Activated T-helper 1 cell treated with anti-CD3 and anti-CD28 coated beads, Interleukin-12 subunit alpha, Interleukin-12 subunit beta, Interleukin-2, Interleukin-4 antibody, amounts not matched to agents 30 ng/mL and 10 ng/mL and 1 ng/mL, durations not matched to agents 14 hours and 24 hours and 36 hours (primary cell): ENCODE measurements at regions of chr19 and their contacts with region 1.

Region 1: GRCh38 chr19:12666265-12667048 is at the starts of genes MAN2B1 and WDR83:
- DNase-seq: peak; percentile 77
- H3K4me3 Mint-ChIP-seq: peak within 1 kb of the TSS; percentile 95
- H3K27ac Mint-ChIP-seq: peak within 1 kb of the TSS; percentile 98
- H3K4me1 Mint-ChIP-seq: peaks cover 47% of the 10 kb centered on the region
- H3K27me3 Mint-ChIP-seq: no peaks in the 10 kb centered on the region
- total RNA-seq, gene MAN2B1: 132 and 143 TPM in 2 replicates
- total RNA-seq, gene WDR83: 25.6 and 27.1 TPM in 2 replicates

Region 2: DNA sequence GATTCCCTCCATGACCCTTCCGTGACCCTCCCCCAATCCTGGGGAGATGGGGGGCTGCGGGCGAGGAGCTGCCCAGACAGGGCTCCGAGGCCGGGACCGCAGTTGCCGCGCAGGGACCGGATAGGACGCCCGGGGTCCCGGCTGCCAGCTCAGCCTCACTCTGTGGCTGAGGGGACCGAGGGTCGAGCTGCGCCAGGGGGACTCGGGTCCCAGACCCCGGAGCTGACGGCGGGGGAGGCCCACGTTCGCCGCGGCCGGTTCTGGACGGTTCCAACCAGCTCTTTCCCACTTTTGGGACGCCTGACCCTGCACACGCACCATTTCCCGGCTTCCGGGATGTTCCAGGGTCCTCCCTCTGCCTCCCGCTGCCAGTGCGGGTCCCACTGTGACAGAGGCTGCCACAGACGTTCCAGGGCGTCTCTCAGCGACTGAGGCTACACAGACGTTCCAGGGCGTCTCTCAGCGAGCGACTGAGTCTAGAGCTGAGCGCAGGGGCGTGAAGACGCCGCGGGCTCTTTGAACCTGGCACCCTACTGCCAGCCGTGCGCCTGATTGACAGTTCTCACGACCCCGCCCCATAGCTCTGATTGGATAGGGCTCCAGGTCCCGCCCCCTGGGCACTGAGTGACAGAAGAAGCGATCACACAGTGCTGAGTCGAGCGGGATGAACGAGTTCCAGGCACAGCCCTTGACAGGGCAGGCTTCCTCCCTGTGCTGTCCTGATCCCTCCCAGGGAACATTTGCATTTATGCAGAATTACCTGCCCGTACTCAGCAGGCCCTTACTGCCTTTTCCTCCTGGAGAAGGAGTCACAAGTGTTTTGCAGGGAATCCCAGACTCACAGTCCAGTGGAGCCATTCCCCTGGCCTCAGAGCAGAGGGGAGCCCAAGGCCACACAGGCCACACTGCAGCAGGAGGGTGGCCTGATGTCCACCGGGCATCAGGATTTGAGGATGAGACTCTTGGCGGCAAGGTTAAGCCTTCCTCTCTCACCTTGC is 333.0 kb before region 1 on chr19 and contains the start of gene ZNF563:
- intact Hi-C with region 1: loop called (anchors 1 kb)
- DNase-seq: peak; percentile 96
- H3K4me3 Mint-ChIP-seq: peak within 1 kb of the TSS; percentile 96
- H3K27ac Mint-ChIP-seq: peak within 1 kb of the TSS; percentile 96
- H3K4me1 Mint-ChIP-seq: peaks cover 38% of the 10 kb centered on the region
- H3K27me3 Mint-ChIP-seq: no peaks in the 10 kb centered on the region
- total RNA-seq, gene ZNF563: 1.4 and 2.5 TPM in 2 replicates

Region 3: DNA sequence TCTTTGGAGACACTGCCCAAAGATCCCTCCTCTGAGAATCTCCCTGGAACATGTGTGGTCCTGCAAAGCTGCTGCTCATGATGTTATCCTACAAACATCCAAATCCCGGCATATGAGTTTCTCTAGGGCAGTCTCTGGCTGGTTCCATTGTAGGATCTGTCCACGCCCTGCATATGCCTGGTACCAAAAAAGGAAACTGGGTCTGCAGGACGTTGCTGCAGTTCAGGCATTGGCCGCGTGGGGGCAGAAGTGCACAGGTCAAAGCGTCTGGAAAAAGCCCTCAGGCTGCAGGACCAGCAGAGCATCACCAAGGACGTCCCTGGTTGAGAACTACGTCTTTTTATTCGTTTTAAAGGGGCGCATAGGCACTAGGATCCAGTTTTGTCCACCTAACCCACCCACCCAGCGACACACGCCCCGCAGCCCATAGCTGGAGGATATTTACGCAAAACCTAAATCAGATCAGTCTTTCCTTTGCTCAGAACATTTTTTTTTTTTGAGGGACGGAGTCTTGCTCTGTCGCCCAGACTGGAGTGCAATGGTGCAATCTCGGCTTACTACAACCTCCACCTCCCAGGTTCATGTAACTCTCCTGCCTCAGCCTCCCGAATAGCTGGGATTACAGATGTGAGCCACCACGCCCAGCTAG is 102.3 kb before region 1 on chr19:
- intact Hi-C with region 1: loop called (anchors 1 kb)
- DNase-seq: peak; percentile 86
- H3K4me3 Mint-ChIP-seq: no peak overlapping the region
- H3K27ac Mint-ChIP-seq: no peak overlapping the region
- H3K4me1 Mint-ChIP-seq: peaks cover 8% of the 10 kb centered on the region
- H3K27me3 Mint-ChIP-seq: no peaks in the 10 kb centered on the region

Region 4: GRCh38 chr19:12639901-12640613 is 26.4 kb before region 1 on chr19:
- intact Hi-C with region 1: loop called (anchors 1 kb)
- DNase-seq: peak; percentile 72
- H3K4me3 Mint-ChIP-seq: peak overlapping the region; percentile 53
- H3K27ac Mint-ChIP-seq: peak overlapping the region; percentile 63
- H3K4me1 Mint-ChIP-seq: peaks cover 13% of the 10 kb centered on the region
- H3K27me3 Mint-ChIP-seq: no peaks in the 10 kb centered on the region

Region 5: DNA sequence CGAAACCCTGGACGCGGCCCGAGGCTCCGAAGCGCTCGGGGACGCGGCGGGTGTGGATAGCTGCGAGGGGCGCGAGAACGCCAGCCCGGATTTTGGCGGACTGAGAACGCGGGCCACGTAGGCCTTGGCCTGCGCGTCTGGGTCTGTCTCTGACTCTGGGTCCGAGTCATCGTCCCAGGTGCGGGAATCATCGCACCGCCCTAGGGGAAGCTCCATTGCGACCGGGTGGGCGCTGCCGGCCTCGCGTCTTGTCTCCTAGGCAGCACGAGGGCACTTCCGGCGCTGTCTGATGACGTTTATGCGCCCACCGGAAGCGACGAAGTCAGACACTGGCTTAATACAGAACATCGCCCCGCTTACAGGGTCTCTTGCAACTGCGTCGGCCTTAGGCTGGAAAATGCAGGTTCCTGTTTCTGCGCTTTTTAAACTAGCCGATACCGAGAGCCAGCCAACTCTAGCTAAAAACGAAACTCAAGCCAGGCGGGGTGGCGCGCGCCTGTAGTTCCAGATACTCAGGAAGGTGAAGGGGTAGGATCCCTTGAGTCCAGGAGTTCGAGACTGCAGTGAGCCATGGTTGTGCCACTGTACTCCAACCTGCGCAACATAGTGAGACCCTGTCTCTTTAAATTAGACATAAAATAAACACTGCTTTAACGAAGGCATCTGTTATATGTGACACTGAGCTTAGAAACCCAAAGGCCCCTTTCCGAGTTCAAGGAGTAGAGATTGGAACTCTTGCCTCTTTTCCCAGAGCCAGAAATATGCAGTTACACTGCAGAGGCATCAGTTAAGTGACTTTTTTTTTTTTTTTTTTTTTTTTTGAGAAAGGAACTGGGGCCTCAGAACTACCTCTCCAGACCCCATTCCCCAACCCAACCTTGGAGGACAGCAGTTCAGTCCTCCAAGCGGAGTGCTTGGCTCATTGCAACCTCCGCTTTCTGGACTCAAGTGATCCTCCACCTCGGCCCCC is 30.2 kb after region 1 on chr19 and contains the start of gene FBXW9:
- intact Hi-C with region 1: loop called (anchors 1 kb)
- DNase-seq: peak; percentile 94
- H3K4me3 Mint-ChIP-seq: peak within 1 kb of the TSS; percentile 89
- H3K27ac Mint-ChIP-seq: peak within 1 kb of the TSS; percentile 93
- H3K4me1 Mint-ChIP-seq: peaks cover 11% of the 10 kb centered on the region
- H3K27me3 Mint-ChIP-seq: no peaks in the 10 kb centered on the region
- total RNA-seq, gene FBXW9: 11.8 and 12.2 TPM in 2 replicates

Region 6: GRCh38 chr19:12715102-12715501 is 48.6 kb after region 1 on chr19:
- intact Hi-C with region 1: no loop called
- DNase-seq: no peak
- H3K4me3 Mint-ChIP-seq: no peak overlapping the region
- H3K27ac Mint-ChIP-seq: no peak overlapping the region
- H3K4me1 Mint-ChIP-seq: peaks cover 13% of the 10 kb centered on the region
- H3K27me3 Mint-ChIP-seq: no peaks in the 10 kb centered on the region